SK-N-SH (cell line): ENCODE measurements at regions of chr11 and their contacts with region 1.

Region 1: GRCh38 chr11:75667831-75668450 is 897 bp downstream of the MAP6 start:
- DNase-seq: peak; percentile 95
- H3K4me3 ChIP-seq: peak overlapping the region; percentile 64 to 70
- H3K27ac ChIP-seq: peak overlapping the region; percentile 41 to 96; a peak in 2 of 4 replicates
- H3K4me1 ChIP-seq: peaks cover 21 to 23% of the 10 kb centered on the region in 2 experiments; a peak in 3 of 4 replicates
- H3K27me3 ChIP-seq: no peaks in the 10 kb centered on the region
- CTCF ChIP-seq: no peak
- EP300 ChIP-seq: no peak
- RAD21 ChIP-seq: no peak

Region 2: GRCh38 chr11:75554258-75555022 is 113.5 kb before region 1 on chr11:
- CTCF ChIA-PET with region 1: interaction called, 3 read pairs
- POLR2A ChIA-PET with region 1: interaction called, 12 read pairs
- DNase-seq: peak; percentile 96
- H3K4me3 ChIP-seq: peak overlapping the region in 1 of 2 experiments; percentile 14; a peak in 1 of 4 replicates
- H3K27ac ChIP-seq: peak overlapping the region; percentile 58 to 98; a peak in 3 of 4 replicates
- H3K4me1 ChIP-seq: peaks cover 38 to 58% of the 10 kb centered on the region in 2 experiments
- H3K27me3 ChIP-seq: no peaks in the 10 kb centered on the region
- CTCF ChIP-seq: no peak
- EP300 ChIP-seq: peak; percentile 20 to 89; a peak in 3 of 4 replicates
- RAD21 ChIP-seq: no peak; the same call in 1 of the 2 replicates

Region 3: GRCh38 chr11:75582895-75583717 is 84.8 kb before region 1 on chr11:
- CTCF ChIA-PET with region 1: interaction called, 7 read pairs
- POLR2A ChIA-PET with region 1: interaction called, 22 read pairs
- DNase-seq: peak; percentile 93
- H3K4me3 ChIP-seq: peak overlapping the region; percentile 51 to 59
- H3K27ac ChIP-seq: peak overlapping the region; percentile 56 to 93
- H3K4me1 ChIP-seq: peaks cover 15 to 20% of the 10 kb centered on the region in 2 experiments; a peak in 2 of 4 replicates
- H3K27me3 ChIP-seq: no peaks in the 10 kb centered on the region
- CTCF ChIP-seq: peak; percentile 50
- EP300 ChIP-seq: no peak
- RAD21 ChIP-seq: no peak; the same call in 1 of the 2 replicates

Region 4: DNA sequence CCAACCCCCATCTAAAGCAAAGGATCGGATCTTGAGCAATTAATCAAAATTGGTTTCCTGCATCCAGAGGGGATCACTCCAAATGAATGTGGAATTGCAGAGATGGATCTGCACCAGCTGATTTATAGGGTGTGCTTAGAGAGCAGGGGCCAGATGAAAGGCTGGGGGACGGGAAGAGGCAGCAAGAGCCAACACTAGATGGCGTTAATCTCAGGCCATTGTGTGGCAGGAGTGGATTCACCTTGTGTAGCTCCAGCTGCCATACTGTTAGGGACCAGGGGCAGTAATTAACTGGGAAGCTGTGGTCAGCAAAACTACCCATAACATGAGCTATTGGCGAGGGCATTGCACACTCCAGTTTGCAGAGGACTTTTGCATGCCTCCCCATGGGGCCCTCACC is 70.3 kb before region 1 on chr11:
- CTCF ChIA-PET with region 1: interaction called, 28 read pairs
- POLR2A ChIA-PET with region 1: interaction called, 4 read pairs
- DNase-seq: peak; percentile 78
- H3K4me3 ChIP-seq: no peak overlapping the region; a peak in 1 of 4 replicates
- H3K27ac ChIP-seq: no peak overlapping the region
- H3K4me1 ChIP-seq: peaks cover 5 to 17% of the 10 kb centered on the region in 2 experiments; a peak in 3 of 4 replicates
- H3K27me3 ChIP-seq: no peaks in the 10 kb centered on the region
- CTCF ChIP-seq: peak; percentile 65
- EP300 ChIP-seq: no peak
- RAD21 ChIP-seq: peak; percentile 79

Region 5: GRCh38 chr11:75625991-75626888 is 41.7 kb before region 1 on chr11:
- CTCF ChIA-PET with region 1: interaction called, 6 read pairs
- POLR2A ChIA-PET with region 1: interaction called, 27 read pairs
- DNase-seq: no peak
- H3K4me3 ChIP-seq: no peak overlapping the region; a peak in 2 of 4 replicates
- H3K27ac ChIP-seq: peak overlapping the region; percentile 87 to 100
- H3K4me1 ChIP-seq: peaks cover 30 to 69% of the 10 kb centered on the region in 2 experiments
- H3K27me3 ChIP-seq: no peaks in the 10 kb centered on the region
- CTCF ChIP-seq: no peak
- EP300 ChIP-seq: no peak; a peak in 1 of 4 replicates
- RAD21 ChIP-seq: no peak

Region 6: GRCh38 chr11:75706260-75706729 is 38.4 kb after region 1 on chr11:
- CTCF ChIA-PET with region 1: interaction called, 10 read pairs
- POLR2A ChIA-PET with region 1: no interaction called
- DNase-seq: peak; percentile 85
- H3K4me3 ChIP-seq: no peak overlapping the region; a peak in 2 of 4 replicates
- H3K27ac ChIP-seq: no peak overlapping the region
- H3K4me1 ChIP-seq: peaks cover 0 to 7% of the 10 kb centered on the region in 2 experiments; a peak in 1 of 4 replicates
- H3K27me3 ChIP-seq: no peaks in the 10 kb centered on the region
- CTCF ChIP-seq: peak; percentile 80
- EP300 ChIP-seq: no peak
- RAD21 ChIP-seq: peak; percentile 67

Region 7: GRCh38 chr11:76096552-76096951 is 428.6 kb after region 1 on chr11:
- CTCF ChIA-PET with region 1: no interaction called
- POLR2A ChIA-PET with region 1: no interaction called
- DNase-seq: no peak
- H3K4me3 ChIP-seq: no peak overlapping the region
- H3K27ac ChIP-seq: no peak overlapping the region
- H3K4me1 ChIP-seq: peaks cover 0 to 4% of the 10 kb centered on the region in 2 experiments; a peak in 2 of 4 replicates
- H3K27me3 ChIP-seq: no peaks in the 10 kb centered on the region
- CTCF ChIP-seq: no peak
- EP300 ChIP-seq: no peak
- RAD21 ChIP-seq: no peak